Breast epithelium (tissue), 4 donors: ENCODE measurements at regions of chr4 and their contacts with region 1.

Region 1: DNA sequence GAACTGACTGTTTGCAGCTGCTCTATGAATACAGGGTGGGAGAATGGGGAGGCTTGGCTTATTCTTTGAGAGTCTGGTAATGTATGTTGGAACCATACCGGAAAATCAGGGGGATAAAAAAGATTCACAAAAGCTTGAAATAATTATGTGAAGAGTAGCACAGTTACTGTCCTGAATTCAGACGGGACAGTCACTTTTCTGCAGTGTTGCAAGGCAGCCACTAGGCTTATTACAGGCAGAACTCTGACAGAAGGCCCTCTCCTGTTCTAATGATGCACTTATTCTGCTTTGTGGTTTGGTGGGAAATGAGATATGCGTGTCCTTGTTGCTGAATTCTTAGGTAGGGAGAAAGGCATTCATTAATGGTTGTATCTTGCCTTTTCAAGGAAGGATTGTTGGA is 37.2 kb downstream of the GUCY1B1 start:
- DNase-seq: no peak
- H3K4me3 ChIP-seq: no peak overlapping the region
- H3K27ac ChIP-seq: no peak overlapping the region
- H3K4me1 ChIP-seq: no peaks in the 10 kb centered on the region
- H3K27me3 ChIP-seq: no peaks in the 10 kb centered on the region
- CTCF ChIP-seq: no peak
- POLR2A ChIP-seq: no peak

Region 2: DNA sequence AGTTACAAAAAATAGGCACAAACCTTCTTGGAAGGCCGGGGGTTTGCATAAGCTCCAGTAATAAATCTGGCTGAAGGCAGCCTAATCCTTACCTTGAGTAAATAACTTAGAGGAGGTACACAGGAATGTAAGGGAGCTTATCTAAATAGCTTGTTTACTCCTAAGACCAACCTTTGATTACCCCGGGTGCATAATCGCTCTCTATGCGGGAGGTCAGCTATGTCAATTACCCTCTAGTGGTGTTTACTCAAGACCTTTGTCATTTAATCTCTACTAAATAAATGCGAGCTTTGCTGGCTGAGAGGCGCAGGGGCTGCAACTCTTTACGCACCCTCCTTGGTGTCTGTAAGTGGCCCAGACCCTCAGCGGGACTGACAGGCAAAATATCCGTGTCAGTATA is 369.0 kb before region 1 on chr4:
- intact Hi-C with region 1: no loop called
- DNase-seq: no peak
- H3K4me3 ChIP-seq: no peak overlapping the region
- H3K27ac ChIP-seq: no peak overlapping the region
- H3K4me1 ChIP-seq: peaks cover 0 to 9% of the 10 kb centered on the region in 2 donors
- H3K27me3 ChIP-seq: no peaks in the 10 kb centered on the region
- CTCF ChIP-seq: no peak
- POLR2A ChIP-seq: no peak

Region 3: DNA sequence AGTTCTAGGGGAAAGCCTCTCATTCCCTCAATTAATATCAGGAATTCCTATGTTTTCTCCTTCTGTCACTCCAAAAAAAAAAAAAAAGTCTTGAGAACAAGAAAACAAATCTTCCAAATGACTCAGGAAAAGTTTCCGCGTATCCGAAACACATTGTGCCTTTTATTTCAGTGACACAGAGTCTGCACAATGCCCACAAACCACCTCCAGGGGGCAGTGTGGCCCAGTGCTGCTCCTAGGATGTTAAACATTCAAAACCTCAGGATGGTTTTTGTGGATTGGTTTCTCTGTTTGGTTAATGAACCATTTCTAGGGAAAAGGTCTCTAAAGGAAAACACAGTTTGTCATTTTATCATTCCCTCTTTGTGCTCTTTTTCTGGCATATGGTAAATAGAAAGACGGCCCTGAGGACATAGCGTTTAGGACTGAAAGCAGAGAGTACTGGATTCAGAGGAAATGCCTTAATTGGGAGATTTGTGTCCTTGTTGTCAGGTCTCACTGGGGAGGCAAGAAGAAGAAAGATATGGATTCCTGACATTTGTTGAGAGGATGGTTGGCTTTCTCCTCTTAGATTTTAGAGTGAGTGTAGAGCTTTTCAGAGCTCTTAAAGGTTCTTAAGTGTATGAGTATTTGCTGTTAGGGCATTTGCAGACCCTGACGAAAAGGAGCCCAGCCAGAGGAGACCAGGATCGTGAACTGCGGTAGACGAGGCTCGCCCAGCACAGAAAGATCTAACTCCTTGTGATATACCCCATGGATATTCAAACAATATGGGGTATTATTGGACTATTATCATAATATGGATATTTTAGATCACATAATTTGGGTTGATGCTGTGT is 353.5 kb before region 1 on chr4:
- intact Hi-C with region 1: loop called (anchors 10 kb)
- DNase-seq: peak; percentile 65 to 77
- H3K4me3 ChIP-seq: peak overlapping the region in 2 of 3 donors; percentile 16 to 32
- H3K27ac ChIP-seq: peak overlapping the region in 1 of 2 donors; percentile 33
- H3K4me1 ChIP-seq: no peaks in the 10 kb centered on the region
- H3K27me3 ChIP-seq: no peaks in the 10 kb centered on the region
- CTCF ChIP-seq: peak; percentile 85 to 91 (median 86)
- POLR2A ChIP-seq: no peak

Region 4: GRCh38 chr4:157315968-157316367 is 1520.0 kb after region 1 on chr4:
- intact Hi-C with region 1: loop called (anchors 5 kb)
- DNase-seq: no peak
- H3K4me3 ChIP-seq: no peak overlapping the region
- H3K27ac ChIP-seq: no peak overlapping the region
- H3K4me1 ChIP-seq: no peaks in the 10 kb centered on the region
- H3K27me3 ChIP-seq: no peaks in the 10 kb centered on the region
- CTCF ChIP-seq: no peak
- POLR2A ChIP-seq: no peak